GM12878 (cell line): ENCODE measurements at regions of chr11 and their contacts with region 1.

Region 1: DNA sequence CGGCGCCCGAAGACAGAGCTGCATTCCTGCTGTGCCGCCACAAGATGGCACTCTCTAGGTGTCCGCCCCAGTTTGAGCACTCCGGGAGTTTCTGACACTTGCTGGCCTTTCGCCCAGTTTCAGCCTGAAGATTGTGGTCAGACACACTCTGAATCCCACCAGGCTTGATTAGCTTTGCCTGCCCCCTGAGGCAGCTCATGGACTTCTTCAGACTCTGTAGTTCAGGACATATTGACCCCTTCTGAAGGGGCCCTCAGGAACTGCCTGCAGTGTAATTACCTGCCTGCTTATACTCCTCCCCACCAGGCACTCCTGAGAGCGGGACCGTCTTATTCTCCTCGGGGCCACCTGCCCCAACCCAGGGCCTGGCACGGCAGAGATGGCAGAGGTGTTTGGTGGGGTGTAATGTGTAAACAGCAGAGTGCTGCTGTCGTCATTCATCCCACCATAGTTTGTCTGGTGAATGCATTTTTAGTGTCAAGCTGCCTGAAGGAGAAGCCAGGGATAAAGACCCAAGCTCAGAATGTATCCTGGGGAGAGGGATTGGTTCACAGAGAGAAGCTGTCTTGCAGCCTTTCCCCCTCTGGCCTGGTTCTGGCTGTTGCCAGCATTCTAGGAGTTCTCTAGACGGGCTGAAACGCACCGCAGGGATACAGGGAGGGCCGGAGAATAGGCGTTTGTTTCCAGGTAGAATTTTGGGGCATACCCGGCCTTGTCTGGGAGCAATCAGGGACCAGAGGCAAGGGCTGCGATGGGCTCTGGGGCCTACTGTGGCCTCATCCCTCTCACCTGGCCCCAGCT is 46.4 kb downstream of the EIF3F start:
- DNase-seq: no peak
- ATAC-seq: peak; percentile 93
- H3K4me3 ChIP-seq: no peak overlapping the region
- H3K27ac ChIP-seq: no peak overlapping the region
- H3K4me1 ChIP-seq: no peaks in the 10 kb centered on the region
- H3K27me3 ChIP-seq: no peaks in the 10 kb centered on the region; a peak in 1 of 4 replicates
- CTCF ChIP-seq: peak; percentile 81 to 90 (median 85)
- EP300 ChIP-seq: no peak
- POLR2A ChIP-seq: no peak
- RAD21 ChIP-seq: peak; percentile 67

Region 2: GRCh38 chr11:7977232-7977917 is 56.1 kb before region 1 on chr11:
- CTCF ChIA-PET with region 1: no interaction called
- POLR2A ChIA-PET with region 1: no interaction called
- RAD21 ChIA-PET with region 1: no interaction called
- SMC1A ChIA-PET with region 1: no interaction called
- in situ Hi-C with region 1: no loop called
- intact Hi-C with region 1: no loop called
- DNase-seq: no peak
- ATAC-seq: no peak
- H3K4me3 ChIP-seq: no peak overlapping the region
- H3K27ac ChIP-seq: no peak overlapping the region
- H3K4me1 ChIP-seq: no peaks in the 10 kb centered on the region
- H3K27me3 ChIP-seq: no peaks in the 10 kb centered on the region
- CTCF ChIP-seq: no peak
- EP300 ChIP-seq: no peak
- POLR2A ChIP-seq: no peak
- RAD21 ChIP-seq: no peak

Region 3: DNA sequence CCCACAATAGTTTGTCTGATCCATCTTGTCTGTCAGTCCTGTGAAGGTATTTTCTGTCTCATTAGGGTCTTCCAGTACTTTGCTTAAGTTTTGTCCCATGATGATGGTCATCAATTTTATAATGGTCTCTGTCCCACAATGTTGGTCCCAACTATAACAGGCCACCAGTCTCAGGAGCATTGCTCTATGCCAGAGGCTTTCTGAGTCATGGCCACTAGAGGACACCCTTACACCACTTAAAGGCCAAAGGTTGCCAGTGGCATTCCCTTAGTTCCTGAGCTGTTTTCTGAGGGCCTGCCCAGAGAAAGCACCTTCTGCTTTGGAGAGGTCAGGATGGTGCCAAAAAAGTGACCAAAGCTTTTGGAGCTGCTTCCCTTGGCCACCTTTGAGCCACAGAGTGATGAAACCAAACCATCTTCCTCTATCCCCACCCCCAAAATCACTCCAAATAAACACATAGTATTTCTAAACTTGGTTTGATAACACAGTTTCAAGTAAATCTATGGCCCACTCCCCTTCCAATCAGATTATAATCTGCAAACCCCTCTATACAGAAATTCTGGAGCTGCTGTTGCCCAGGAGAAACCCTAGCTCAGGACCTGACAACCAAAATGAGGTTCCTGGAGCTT is 27.0 kb before region 1 on chr11:
- CTCF ChIA-PET with region 1: interaction called, 22 read pairs
- POLR2A ChIA-PET with region 1: no interaction called
- RAD21 ChIA-PET with region 1: interaction called, 10 read pairs
- SMC1A ChIA-PET with region 1: interaction called, 12 read pairs
- in situ Hi-C with region 1: no loop called
- intact Hi-C with region 1: no loop called
- DNase-seq: peak; percentile 7
- ATAC-seq: peak; percentile 95
- H3K4me3 ChIP-seq: no peak overlapping the region
- H3K27ac ChIP-seq: no peak overlapping the region
- H3K4me1 ChIP-seq: no peaks in the 10 kb centered on the region
- H3K27me3 ChIP-seq: no peaks in the 10 kb centered on the region
- CTCF ChIP-seq: peak; percentile 91 to 92 (median 91)
- EP300 ChIP-seq: no peak
- POLR2A ChIP-seq: no peak
- RAD21 ChIP-seq: peak; percentile 94

Region 4: DNA sequence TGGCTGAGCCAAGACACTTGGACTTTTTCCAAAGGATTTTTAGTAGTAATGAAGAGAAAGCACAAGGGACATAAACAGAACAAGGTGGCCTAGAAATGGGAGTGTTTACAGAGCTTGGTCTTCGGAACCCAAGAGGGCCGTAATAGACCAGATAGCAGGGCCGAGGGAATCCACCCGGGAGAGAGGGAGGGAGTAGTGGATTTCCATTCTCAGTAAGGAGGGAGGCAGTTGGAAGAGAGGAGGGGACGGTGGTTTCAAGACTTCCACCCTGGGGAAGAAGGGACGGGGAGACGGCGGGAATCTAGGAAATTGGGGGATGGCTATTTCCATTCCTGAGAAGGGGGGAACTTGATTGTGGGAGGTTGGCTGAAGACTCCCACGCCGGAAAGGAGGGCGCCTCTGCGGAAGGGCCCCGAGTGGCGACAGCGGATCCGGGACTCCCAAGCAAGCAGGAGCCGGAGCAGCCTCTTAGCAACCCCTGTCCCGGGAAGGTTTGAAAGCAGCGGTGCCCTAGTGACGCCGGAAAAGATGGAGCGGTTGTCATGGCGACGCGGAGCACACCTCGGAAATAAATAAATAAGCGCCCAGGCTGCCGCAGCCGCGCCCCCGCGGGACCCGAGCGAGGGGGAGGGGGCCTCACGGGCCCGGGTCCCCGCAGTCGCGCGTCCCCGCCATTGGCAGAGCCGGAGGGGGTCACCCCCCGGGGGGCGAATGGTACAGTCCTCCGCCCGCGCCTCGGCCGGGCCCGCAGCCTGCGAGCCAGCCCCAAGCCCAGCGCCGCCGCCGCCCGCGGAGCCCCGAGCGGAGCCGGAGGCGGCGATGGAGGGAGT is 14.8 kb before region 1 on chr11:
- CTCF ChIA-PET with region 1: interaction called, 24 read pairs
- POLR2A ChIA-PET with region 1: no interaction called
- RAD21 ChIA-PET with region 1: no interaction called
- SMC1A ChIA-PET with region 1: interaction called, 5 read pairs
- in situ Hi-C with region 1: no loop called
- intact Hi-C with region 1: no loop called
- DNase-seq: no peak
- ATAC-seq: peak; percentile 68
- H3K4me3 ChIP-seq: no peak overlapping the region
- H3K27ac ChIP-seq: no peak overlapping the region
- H3K4me1 ChIP-seq: no peaks in the 10 kb centered on the region
- H3K27me3 ChIP-seq: peaks cover 5 to 8% of the 10 kb centered on the region in 2 experiments
- CTCF ChIP-seq: no peak
- EP300 ChIP-seq: no peak
- POLR2A ChIP-seq: no peak
- RAD21 ChIP-seq: no peak

Region 5: GRCh38 chr11:8047382-8047781 is 13.9 kb after region 1 on chr11:
- CTCF ChIA-PET with region 1: interaction called, 27 read pairs
- POLR2A ChIA-PET with region 1: no interaction called
- RAD21 ChIA-PET with region 1: no interaction called
- SMC1A ChIA-PET with region 1: interaction called, 3 read pairs
- in situ Hi-C with region 1: no loop called
- intact Hi-C with region 1: no loop called
- DNase-seq: no peak
- ATAC-seq: no peak
- H3K4me3 ChIP-seq: no peak overlapping the region
- H3K27ac ChIP-seq: no peak overlapping the region
- H3K4me1 ChIP-seq: no peaks in the 10 kb centered on the region
- H3K27me3 ChIP-seq: peaks cover 0 to 3% of the 10 kb centered on the region in 2 experiments; a peak in 1 of 4 replicates
- CTCF ChIP-seq: no peak
- EP300 ChIP-seq: no peak
- POLR2A ChIP-seq: no peak
- RAD21 ChIP-seq: no peak

Region 6: GRCh38 chr11:8070417-8071115 is 37.1 kb after region 1 on chr11:
- CTCF ChIA-PET with region 1: interaction called, 14 read pairs
- POLR2A ChIA-PET with region 1: no interaction called
- RAD21 ChIA-PET with region 1: interaction called, 5 read pairs
- SMC1A ChIA-PET with region 1: interaction called, 4 read pairs
- in situ Hi-C with region 1: no loop called
- intact Hi-C with region 1: loop called (anchors 1 kb)
- DNase-seq: no peak
- ATAC-seq: peak; percentile 85
- H3K4me3 ChIP-seq: no peak overlapping the region
- H3K27ac ChIP-seq: no peak overlapping the region
- H3K4me1 ChIP-seq: no peaks in the 10 kb centered on the region
- H3K27me3 ChIP-seq: peaks cover 2 to 7% of the 10 kb centered on the region in 2 experiments; a peak in 3 of 4 replicates
- CTCF ChIP-seq: peak; percentile 12 to 37 (median 34); a peak in 3 of 6 replicates
- EP300 ChIP-seq: no peak
- POLR2A ChIP-seq: no peak
- RAD21 ChIP-seq: peak; percentile 35; the same call in 1 of the 2 replicates

Region 7: DNA sequence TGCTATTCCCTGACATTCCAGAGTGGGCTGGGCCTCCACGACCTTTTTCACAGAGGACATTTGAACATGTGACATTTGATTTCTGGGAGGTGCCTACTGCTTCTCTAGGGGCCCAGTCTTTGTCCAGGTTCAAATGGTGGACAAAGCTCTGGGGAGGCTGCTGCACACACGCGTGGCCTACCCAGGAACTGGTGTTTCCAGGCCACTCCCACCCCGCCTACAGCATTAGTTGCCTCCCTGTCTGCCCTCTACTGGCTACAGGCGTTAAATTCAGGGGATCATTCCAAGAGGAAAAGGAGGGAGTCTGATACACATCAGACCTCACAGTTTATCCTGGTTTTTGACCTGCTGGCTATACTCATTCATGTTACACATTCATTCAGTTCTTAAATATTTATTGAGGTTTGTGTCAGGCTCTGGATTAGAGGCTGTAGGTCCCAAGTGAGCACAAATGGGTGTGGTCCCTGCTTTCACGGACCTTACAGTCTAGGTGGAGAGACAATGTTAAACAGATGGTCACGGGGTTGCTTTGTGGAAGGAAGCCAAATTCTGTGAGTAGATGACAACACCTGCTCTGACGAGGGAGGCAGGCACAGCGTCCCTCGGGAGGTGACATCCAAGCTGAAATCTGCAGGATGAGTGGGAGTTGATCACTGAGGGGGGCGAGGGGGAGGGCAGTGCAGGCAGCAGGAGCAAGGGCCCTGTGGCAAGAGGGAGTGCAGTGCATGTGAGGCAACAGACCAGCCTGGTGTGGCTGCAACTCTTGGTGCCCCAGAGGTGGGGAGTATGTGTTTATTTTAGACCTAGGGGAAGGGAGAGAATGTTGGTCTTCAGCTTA is 59.3 kb after region 1 on chr11:
- CTCF ChIA-PET with region 1: interaction called, 77 read pairs
- POLR2A ChIA-PET with region 1: no interaction called
- RAD21 ChIA-PET with region 1: interaction called, 30 read pairs
- SMC1A ChIA-PET with region 1: interaction called, 19 read pairs
- in situ Hi-C with region 1: no loop called
- intact Hi-C with region 1: no loop called
- DNase-seq: no peak
- ATAC-seq: peak; percentile 87
- H3K4me3 ChIP-seq: no peak overlapping the region
- H3K27ac ChIP-seq: no peak overlapping the region
- H3K4me1 ChIP-seq: no peaks in the 10 kb centered on the region
- H3K27me3 ChIP-seq: no peaks in the 10 kb centered on the region
- CTCF ChIP-seq: peak; percentile 44 to 63 (median 62)
- EP300 ChIP-seq: no peak
- POLR2A ChIP-seq: no peak
- RAD21 ChIP-seq: peak; percentile 28; the same call in 1 of the 2 replicates

Region 8: DNA sequence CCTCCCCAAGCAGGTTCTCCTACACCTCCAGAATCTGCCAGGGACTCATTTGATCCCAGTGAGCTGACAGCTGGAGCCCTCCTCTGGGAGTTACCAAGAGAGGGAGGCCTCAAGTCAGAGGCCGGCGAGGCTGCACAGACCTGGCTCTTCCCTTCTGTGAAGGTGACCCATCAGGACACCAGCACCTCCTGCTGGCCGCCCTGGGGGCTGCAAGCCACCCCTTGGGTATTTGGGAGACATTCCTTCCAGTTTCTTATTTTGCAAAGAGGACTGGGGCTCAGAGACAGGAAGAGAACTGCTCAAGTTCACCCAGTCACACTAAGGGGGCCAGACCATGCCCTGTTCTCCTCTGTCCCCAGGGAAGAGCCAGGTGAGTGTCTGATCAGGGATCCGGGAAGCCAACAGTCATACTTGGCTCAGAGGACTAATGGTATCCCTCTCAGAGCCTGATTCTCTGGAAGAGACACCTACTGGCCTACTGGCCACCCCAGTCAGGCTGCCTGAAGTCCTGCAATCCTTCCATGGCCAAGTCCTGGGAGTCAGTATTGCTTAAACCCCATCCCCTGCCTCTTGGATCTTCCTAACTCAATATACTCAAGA is 175.8 kb after region 1 on chr11:
- CTCF ChIA-PET with region 1: no interaction called
- POLR2A ChIA-PET with region 1: no interaction called
- RAD21 ChIA-PET with region 1: no interaction called
- SMC1A ChIA-PET with region 1: no interaction called
- in situ Hi-C with region 1: no loop called
- intact Hi-C with region 1: loop called (anchors 10 kb)
- DNase-seq: no peak
- ATAC-seq: peak; percentile 79
- H3K4me3 ChIP-seq: no peak overlapping the region
- H3K27ac ChIP-seq: no peak overlapping the region
- H3K4me1 ChIP-seq: no peaks in the 10 kb centered on the region
- H3K27me3 ChIP-seq: peaks cover 3% of the 10 kb centered on the region in 2 experiments; a peak in 3 of 4 replicates
- CTCF ChIP-seq: peak; percentile 56 to 81 (median 75)
- EP300 ChIP-seq: no peak
- POLR2A ChIP-seq: no peak
- RAD21 ChIP-seq: peak; percentile 55

Region 9: GRCh38 chr11:8263769-8264410 is 230.4 kb after region 1 on chr11 and contains the start of gene LMO1:
- CTCF ChIA-PET with region 1: no interaction called
- POLR2A ChIA-PET with region 1: no interaction called
- RAD21 ChIA-PET with region 1: no interaction called
- SMC1A ChIA-PET with region 1: no interaction called
- in situ Hi-C with region 1: no loop called
- intact Hi-C with region 1: no loop called
- DNase-seq: no peak
- ATAC-seq: peak; percentile 87
- H3K4me3 ChIP-seq: peak within 1 kb of the TSS; percentile 50
- H3K27ac ChIP-seq: no peak within 1 kb of the TSS
- H3K4me1 ChIP-seq: no peaks in the 10 kb centered on the region
- H3K27me3 ChIP-seq: peaks cover 20 to 24% of the 10 kb centered on the region in 2 experiments
- CTCF ChIP-seq: peak; percentile 83 to 93 (median 92)
- EP300 ChIP-seq: no peak
- POLR2A ChIP-seq: no peak
- RAD21 ChIP-seq: peak; percentile 52
- polyA plus RNA-seq, gene LMO1: not detected

Region 10: GRCh38 chr11:9250139-9250582 is 1216.7 kb after region 1 on chr11:
- CTCF ChIA-PET with region 1: no interaction called
- POLR2A ChIA-PET with region 1: no interaction called
- RAD21 ChIA-PET with region 1: no interaction called
- SMC1A ChIA-PET with region 1: no interaction called
- in situ Hi-C with region 1: no loop called
- intact Hi-C with region 1: no loop called
- DNase-seq: peak; percentile 77
- ATAC-seq: peak; percentile 83
- H3K4me3 ChIP-seq: no peak overlapping the region
- H3K27ac ChIP-seq: peak overlapping the region; percentile 35; the same call in 1 of the 2 replicates
- H3K4me1 ChIP-seq: peaks cover 30% of the 10 kb centered on the region
- H3K27me3 ChIP-seq: no peaks in the 10 kb centered on the region
- CTCF ChIP-seq: no peak
- EP300 ChIP-seq: peak; percentile 42 to 58; a peak in 2 of 4 replicates
- POLR2A ChIP-seq: no peak
- RAD21 ChIP-seq: no peak